ENCODE measurements at regions of chr3 and their contacts with region 1.

Region 1: DNA sequence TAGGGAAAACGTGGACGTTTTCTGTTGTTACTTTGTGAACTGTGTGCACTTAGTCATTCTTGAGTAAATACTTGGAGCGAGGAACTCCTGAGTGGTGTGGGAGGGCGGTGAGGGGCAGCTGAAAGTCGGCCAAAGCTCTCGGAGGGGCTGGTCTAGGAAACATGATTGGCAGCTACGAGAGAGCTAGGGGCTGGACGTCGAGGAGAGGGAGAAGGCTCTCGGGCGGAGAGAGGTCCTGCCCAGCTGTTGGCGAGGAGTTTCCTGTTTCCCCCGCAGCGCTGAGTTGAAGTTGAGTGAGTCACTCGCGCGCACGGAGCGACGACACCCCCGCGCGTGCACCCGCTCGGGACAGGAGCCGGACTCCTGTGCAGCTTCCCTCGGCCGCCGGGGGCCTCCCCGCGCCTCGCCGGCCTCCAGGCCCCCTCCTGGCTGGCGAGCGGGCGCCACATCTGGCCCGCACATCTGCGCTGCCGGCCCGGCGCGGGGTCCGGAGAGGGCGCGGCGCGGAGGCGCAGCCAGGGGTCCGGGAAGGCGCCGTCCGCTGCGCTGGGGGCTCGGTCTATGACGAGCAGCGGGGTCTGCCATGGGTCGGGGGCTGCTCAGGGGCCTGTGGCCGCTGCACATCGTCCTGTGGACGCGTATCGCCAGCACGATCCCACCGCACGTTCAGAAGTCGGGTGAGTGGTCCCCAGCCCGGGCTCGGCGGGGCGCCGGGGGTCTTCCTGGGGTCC is at the start of gene TGFBR2:
- DNase-seq: peak; percentile 100
- H3K4me3 ChIP-seq: peak within 1 kb of the TSS; percentile 57 to 99 (median 86)
- H3K27ac ChIP-seq: peak within 1 kb of the TSS; percentile 96
- H3K4me1 ChIP-seq: peaks cover 50% of the 10 kb centered on the region
- H3K27me3 ChIP-seq: no peaks in the 10 kb centered on the region
- CTCF ChIP-seq: peak; percentile 3 to 35
- POLR2A ChIP-seq: peak; percentile 79
- total RNA-seq, gene TGFBR2: 250 and 259 TPM in 2 replicates

Region 2: DNA sequence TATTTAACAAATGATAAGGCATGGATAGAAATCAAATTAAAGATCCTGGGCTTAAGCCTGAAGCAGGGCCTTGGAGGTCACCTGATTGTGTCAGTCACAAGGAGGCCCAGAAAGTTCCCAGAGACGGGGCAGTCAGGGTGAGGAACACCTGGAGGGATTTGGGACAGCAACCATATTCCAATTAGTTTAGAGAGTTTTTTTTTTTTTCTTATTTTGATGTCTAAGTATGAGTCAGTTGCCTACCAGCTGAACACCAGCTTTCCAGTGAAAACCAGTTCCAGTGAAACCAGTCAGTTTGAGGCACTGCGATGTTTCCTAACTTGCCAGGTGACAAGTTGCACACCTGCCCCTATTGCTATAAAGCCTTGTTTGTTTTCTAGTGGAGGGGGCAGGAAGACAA is 1907.2 kb before region 1 on chr3:
- CTCF ChIA-PET with region 1: no interaction called
- POLR2A ChIA-PET with region 1: no interaction called
- dilution Hi-C with region 1: no loop called
- intact Hi-C with region 1: no loop called
- DNase-seq: no peak
- H3K4me3 ChIP-seq: no peak overlapping the region
- H3K27ac ChIP-seq: no peak overlapping the region
- H3K4me1 ChIP-seq: no peaks in the 10 kb centered on the region
- H3K27me3 ChIP-seq: no peaks in the 10 kb centered on the region
- CTCF ChIP-seq: no peak
- POLR2A ChIP-seq: no peak

Region 3: GRCh38 chr3:30227571-30228301 is 378.7 kb before region 1 on chr3:
- CTCF ChIA-PET with region 1: no interaction called
- POLR2A ChIA-PET with region 1: no interaction called
- dilution Hi-C with region 1: no loop called
- intact Hi-C with region 1: loop called (anchors 1 kb)
- DNase-seq: peak; percentile 90
- H3K4me3 ChIP-seq: no peak overlapping the region
- H3K27ac ChIP-seq: peak overlapping the region; percentile 67
- H3K4me1 ChIP-seq: peaks cover 26% of the 10 kb centered on the region
- H3K27me3 ChIP-seq: no peaks in the 10 kb centered on the region
- CTCF ChIP-seq: no peak
- POLR2A ChIP-seq: no peak

Region 4: DNA sequence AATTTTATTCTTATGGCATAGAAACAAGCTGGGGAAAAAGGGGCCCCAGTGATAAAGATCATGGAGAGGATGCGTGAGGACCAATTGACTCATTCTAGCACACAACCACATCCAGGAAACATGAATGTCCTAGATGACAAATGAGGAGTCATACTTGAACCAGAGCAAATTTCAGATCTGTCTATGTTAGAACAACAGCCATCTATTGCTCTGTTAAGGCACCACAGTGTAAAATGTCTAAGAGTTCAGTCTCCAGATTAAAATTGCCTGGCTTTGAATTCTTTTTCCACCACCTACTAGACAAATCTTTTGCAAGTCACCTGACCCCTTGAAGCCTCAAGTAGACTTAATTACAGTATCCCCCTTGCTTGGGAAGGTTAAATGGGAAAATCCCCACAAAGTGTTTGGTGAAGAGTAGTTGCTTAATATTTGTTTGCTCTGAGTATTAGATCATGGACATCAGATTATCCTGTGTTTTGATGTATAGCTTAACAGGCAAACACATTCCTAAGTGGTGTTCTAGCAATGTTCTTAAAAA is 258.7 kb before region 1 on chr3:
- CTCF ChIA-PET with region 1: interaction called, 11 read pairs
- POLR2A ChIA-PET with region 1: interaction called, 5 read pairs
- dilution Hi-C with region 1: loop called (anchors 25 kb)
- intact Hi-C with region 1: loop called (anchors 1 kb)
- DNase-seq: peak; percentile 84
- H3K4me3 ChIP-seq: no peak overlapping the region
- H3K27ac ChIP-seq: peak overlapping the region; percentile 97
- H3K4me1 ChIP-seq: peaks cover 81% of the 10 kb centered on the region
- H3K27me3 ChIP-seq: no peaks in the 10 kb centered on the region
- CTCF ChIP-seq: no peak
- POLR2A ChIP-seq: peak; percentile 86

Region 5: DNA sequence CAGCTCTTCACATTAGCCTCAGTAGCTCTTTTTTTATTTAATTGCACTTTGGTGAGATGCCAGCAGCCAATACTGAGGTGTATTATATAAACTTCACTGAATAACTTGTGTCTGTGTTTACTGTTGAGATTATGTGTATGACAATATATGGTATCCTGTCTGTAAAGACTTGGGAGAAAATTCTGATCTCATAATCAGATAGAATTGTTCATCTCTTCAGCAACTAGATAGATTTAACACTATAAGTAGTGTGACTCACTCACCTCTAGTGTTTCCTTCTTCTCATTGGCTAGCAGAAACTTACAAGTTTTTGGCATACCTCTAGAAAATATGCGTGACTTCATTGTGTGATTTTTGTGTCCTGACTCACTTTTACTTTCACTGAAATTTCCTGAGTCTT is 67.7 kb before region 1 on chr3:
- CTCF ChIA-PET with region 1: interaction called, 4 read pairs
- POLR2A ChIA-PET with region 1: interaction called, 13 read pairs
- dilution Hi-C with region 1: no loop called
- intact Hi-C with region 1: loop called (anchors 1 kb)
- DNase-seq: peak; percentile 93
- H3K4me3 ChIP-seq: no peak overlapping the region
- H3K27ac ChIP-seq: peak overlapping the region; percentile 97
- H3K4me1 ChIP-seq: peaks cover 26% of the 10 kb centered on the region
- H3K27me3 ChIP-seq: no peaks in the 10 kb centered on the region
- CTCF ChIP-seq: no peak
- POLR2A ChIP-seq: no peak

Region 6: DNA sequence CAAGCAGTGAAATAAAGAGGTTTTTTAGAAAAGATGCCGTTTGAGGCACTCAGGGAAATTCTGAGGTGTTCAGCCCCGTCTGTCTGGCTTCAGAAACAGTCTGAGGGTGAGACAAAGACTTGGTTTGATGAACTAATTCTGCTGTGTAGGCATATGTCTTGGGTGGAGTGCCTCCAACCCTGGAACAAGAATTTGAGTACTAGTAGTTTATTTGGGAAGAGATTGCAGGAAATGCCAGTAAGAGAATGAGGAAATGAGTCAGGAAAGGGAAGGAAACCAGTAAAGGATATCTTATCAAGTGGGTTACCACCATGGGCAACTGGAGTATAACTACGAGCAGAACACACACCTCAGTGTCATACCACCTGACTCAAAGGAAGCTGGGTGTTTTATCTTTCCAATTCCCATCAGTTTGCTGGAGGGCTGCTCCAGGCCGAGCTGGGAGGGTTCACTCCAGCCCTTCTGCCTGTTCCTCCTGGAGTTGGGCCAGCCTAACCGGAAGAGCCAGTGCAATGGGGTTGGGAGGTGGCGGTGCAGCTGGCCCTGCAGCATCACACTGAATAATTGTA is 75.3 kb after region 1 on chr3:
- CTCF ChIA-PET with region 1: interaction called, 9 read pairs
- POLR2A ChIA-PET with region 1: interaction called, 3 read pairs
- dilution Hi-C with region 1: no loop called
- intact Hi-C with region 1: loop called (anchors 1 kb)
- DNase-seq: peak; percentile 99
- H3K4me3 ChIP-seq: no peak overlapping the region
- H3K27ac ChIP-seq: peak overlapping the region; percentile 98
- H3K4me1 ChIP-seq: peaks cover 92% of the 10 kb centered on the region
- H3K27me3 ChIP-seq: no peaks in the 10 kb centered on the region
- CTCF ChIP-seq: no peak
- POLR2A ChIP-seq: peak; percentile 87